A673 (cell line): ENCODE measurements at regions of chr21 and their contacts with region 1.

Region 1: DNA sequence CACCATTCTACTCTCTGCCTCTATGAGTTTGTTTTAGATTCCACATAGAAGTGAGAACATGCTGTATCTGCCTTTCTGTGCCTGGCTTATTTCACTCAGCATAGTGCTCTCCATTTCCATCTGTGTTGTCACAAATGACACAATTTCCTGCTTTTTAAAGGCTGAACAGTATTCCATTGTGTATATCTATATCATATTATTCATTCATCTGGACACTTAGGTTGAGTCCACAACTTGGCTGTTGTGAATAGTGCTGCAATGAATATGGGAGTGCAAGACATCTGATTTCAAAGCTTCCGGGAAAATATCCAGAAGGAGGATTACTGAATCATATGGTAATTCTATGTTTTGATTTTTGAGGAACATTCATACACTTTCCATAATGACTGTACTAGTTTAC is 20.1 kb upstream of the DONSON start:
- DNase-seq: no peak
- H3K4me3 ChIP-seq: no peak overlapping the region
- H3K27ac ChIP-seq: no peak overlapping the region
- H3K4me1 ChIP-seq: no peaks in the 10 kb centered on the region
- H3K27me3 ChIP-seq: no peaks in the 10 kb centered on the region
- CTCF ChIP-seq: no peak

Region 2: DNA sequence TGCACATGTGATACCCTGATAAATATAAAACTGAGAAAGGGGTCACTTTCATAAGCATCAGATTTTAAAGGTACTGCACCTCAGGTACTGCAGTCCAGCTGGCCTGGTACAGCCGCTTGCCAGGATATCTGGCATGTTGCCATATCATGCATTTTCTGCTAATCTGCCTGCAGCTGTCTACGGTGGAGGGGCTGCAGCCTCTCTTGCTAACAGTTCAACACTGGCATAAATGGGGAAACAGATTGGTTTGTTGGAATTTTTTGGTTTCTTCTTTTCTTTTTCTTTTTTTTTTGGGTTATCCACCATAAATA is 1401.2 kb before region 1 on chr21:
- CTCF ChIA-PET with region 1: interaction called, 16 read pairs
- POLR2A ChIA-PET with region 1: no interaction called
- intact Hi-C with region 1: no loop called
- DNase-seq: peak; percentile 7
- H3K4me3 ChIP-seq: no peak overlapping the region
- H3K27ac ChIP-seq: no peak overlapping the region
- H3K4me1 ChIP-seq: no peaks in the 10 kb centered on the region
- H3K27me3 ChIP-seq: no peaks in the 10 kb centered on the region
- CTCF ChIP-seq: no peak

Region 3: GRCh38 chr21:33199516-33200217 is 408.9 kb before region 1 on chr21:
- CTCF ChIA-PET with region 1: interaction called, 6 read pairs
- POLR2A ChIA-PET with region 1: no interaction called
- intact Hi-C with region 1: loop called (anchors 5 kb)
- DNase-seq: peak; percentile 92
- H3K4me3 ChIP-seq: no peak overlapping the region
- H3K27ac ChIP-seq: no peak overlapping the region
- H3K4me1 ChIP-seq: no peaks in the 10 kb centered on the region
- H3K27me3 ChIP-seq: no peaks in the 10 kb centered on the region
- CTCF ChIP-seq: peak; percentile 81

Region 4: DNA sequence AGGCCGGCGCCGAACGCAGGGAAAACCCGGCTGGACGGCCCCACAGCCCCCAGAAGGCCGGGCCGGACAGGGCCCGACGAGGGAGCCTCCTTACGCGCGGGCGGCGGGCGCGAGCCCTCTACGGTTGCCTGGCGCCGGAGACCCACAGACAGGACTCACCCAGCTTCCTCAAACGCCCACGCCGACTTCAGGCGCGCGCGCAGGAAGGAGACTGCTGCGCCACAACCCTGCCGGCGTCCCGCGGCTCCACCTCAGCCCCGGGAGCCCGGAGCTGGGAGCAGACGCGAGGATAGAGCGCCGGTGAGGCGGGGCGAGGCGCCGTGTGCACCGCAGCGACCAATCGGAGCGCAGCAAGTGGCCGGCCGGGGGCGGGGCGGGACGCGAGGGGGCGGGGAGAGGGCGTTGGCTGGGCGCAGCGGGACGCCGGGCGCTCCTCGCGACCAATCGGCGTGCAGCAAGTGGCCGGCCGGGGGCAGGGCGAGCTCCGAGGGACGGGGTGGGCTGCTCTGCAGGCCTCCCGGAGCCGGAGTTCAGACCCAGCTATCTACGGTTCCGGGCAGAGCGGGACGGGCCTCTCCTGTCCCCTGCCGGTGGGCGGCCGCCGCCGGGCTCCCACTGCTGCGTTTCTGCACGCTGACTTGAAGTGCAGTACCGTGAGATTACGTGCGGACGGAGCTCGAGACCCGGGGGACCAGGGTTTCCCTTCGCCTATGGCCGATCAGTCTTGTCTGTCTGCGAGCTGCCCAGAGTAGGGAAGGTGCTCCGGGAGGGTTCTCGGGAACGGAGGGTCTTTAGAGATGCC is 128.7 kb before region 1 on chr21 and contains the start of gene TMEM50B:
- CTCF ChIA-PET with region 1: interaction called, 11 read pairs
- POLR2A ChIA-PET with region 1: no interaction called
- intact Hi-C with region 1: no loop called
- DNase-seq: peak; percentile 98
- H3K4me3 ChIP-seq: peak within 1 kb of the TSS; percentile 75
- H3K27ac ChIP-seq: peak within 1 kb of the TSS; percentile 79
- H3K4me1 ChIP-seq: peaks cover 7% of the 10 kb centered on the region
- H3K27me3 ChIP-seq: no peaks in the 10 kb centered on the region
- CTCF ChIP-seq: peak; percentile 46
- total RNA-seq, gene TMEM50B: 18.9 and 19.1 TPM in 2 replicates

Region 5: DNA sequence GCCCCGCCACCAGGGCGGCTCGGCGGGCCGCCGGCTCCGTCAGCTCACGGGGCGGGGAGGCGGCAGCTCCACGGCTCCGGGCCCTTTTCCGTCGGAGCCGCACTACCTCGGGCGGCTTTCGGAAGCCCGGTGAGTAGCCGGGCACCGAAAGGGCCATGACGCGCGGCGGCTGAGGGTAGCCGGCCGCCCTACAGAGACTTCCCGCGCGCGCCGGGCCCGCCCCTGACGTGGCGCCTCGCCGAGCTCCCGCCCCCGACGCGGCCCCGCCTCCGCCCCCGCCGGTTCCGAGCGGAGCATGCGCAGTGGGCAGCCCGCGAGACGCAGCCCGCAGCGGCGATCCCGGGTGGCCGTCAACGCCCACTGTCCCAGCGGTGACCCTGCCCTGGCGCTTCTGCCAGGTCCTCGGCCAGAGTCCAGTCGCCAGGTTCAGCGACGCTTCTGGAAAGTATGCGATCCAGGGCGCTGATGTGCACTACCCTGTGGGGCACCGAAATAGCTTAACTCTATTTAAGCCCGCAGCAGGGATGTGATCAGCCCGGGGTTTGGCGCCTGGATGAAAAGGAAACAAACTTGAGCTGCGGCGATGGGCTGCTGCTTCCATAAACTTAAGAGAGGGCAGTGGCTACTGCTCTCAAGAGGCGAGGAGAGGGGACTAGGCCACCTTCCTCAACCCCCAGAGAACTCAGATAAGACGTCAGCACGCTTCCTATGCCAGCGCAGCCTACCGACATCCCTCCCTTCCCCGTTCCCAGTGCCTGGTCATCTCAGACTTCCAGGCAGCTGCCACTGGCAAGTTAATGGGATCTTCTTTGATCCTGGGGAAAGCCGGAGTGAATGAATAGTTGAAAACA is 19.8 kb before region 1 on chr21 and contains the start of gene DONSON:
- CTCF ChIA-PET with region 1: interaction called, 13 read pairs
- POLR2A ChIA-PET with region 1: no interaction called
- intact Hi-C with region 1: no loop called
- DNase-seq: peak; percentile 87
- H3K4me3 ChIP-seq: peak within 1 kb of the TSS; percentile 98
- H3K27ac ChIP-seq: peak within 1 kb of the TSS; percentile 96
- H3K4me1 ChIP-seq: peaks cover 8% of the 10 kb centered on the region
- H3K27me3 ChIP-seq: no peaks in the 10 kb centered on the region
- CTCF ChIP-seq: no peak
- total RNA-seq, gene DONSON: 42.6 and 48.5 TPM in 2 replicates

Region 6: DNA sequence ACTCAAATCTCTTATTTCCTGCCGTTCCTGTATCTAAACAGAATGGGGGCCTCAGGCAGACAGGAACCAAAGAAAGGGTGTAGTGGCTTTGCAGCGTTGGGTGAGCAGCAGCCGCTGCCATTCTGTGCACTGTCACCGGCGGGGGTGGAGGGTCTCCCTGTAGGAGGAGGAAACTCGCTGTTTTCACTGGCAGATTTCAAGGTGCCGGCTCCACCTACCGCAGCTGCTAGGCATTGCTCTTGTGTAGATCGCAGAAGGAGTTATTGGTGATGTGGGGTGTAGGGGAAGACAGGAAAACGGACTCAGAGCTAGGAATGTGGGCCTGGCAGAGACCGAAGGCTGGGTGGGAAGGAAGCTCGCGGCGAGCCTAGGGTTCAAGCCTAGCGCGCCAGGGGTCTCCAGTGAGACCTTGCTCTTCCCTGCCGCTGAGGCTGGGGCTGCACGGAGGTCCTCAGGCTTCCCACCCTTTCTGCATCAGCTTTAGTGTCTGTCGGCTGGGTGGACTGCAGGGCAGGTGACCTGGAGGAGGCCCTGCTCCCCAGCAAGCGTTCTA is 286.3 kb after region 1 on chr21:
- CTCF ChIA-PET with region 1: interaction called, 3 read pairs
- POLR2A ChIA-PET with region 1: no interaction called
- intact Hi-C with region 1: loop called (anchors 10 kb)
- DNase-seq: peak; percentile 94
- H3K4me3 ChIP-seq: peak overlapping the region; percentile 12
- H3K27ac ChIP-seq: no peak overlapping the region
- H3K4me1 ChIP-seq: peaks cover 15% of the 10 kb centered on the region
- H3K27me3 ChIP-seq: no peaks in the 10 kb centered on the region
- CTCF ChIP-seq: peak; percentile 81

Region 7: GRCh38 chr21:34037009-34037795 is 428.6 kb after region 1 on chr21:
- CTCF ChIA-PET with region 1: no interaction called
- POLR2A ChIA-PET with region 1: no interaction called
- intact Hi-C with region 1: no loop called
- DNase-seq: no peak
- H3K4me3 ChIP-seq: no peak overlapping the region
- H3K27ac ChIP-seq: no peak overlapping the region
- H3K4me1 ChIP-seq: no peaks in the 10 kb centered on the region
- H3K27me3 ChIP-seq: no peaks in the 10 kb centered on the region
- CTCF ChIP-seq: no peak